Uterus (tissue), 4 donors: ENCODE measurements at regions of chr2 and their contacts with region 1.

Region 1: GRCh38 chr2:62831729-62832128 is 126.2 kb downstream of the EHBP1 start:
- DNase-seq: no peak
- H3K4me3 ChIP-seq: no peak overlapping the region
- H3K27ac ChIP-seq: no peak overlapping the region
- H3K4me1 ChIP-seq: no peaks in the 10 kb centered on the region
- H3K27me3 ChIP-seq: no peaks in the 10 kb centered on the region
- CTCF ChIP-seq: no peak
- POLR2A ChIP-seq: no peak

Region 2: DNA sequence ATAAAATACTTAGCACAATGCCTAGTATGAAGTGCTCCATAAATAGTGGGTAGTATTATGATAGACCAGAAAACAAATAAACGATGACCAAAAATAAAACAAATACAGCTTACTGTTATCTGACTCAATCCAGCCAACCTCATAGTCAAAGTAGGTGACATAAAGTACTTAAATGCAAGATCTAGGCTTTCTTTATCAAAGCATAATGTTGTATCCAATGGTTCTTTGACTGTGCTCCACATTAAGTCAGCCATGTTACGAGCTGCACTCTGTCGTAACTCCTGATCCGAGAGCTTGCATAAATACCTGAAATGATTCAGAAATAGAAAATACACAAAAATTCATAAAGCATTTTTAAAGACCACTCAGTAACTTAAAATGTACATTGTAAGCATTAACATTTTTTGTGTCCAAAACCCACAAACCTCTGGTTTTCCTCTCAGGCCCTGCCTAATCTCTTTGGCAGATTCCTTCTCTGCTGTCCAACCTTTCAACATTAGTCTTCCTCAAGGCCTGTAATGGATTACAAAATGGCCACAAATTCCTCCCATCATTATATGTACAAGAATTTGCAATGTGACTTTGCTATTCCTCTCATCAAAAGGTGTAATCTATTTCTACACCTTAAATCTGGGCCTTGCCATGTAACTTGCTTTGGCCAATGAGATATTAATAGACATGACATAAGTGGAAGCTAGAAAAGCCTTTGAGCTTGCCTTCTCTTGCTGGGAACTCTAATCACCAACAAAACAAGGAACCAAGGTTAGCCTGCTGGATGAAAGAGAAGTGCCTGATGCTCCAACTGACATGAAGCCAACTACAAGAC is 1451.5 kb before region 1 on chr2:
- intact Hi-C with region 1: loop called (anchors 10 kb)
- DNase-seq: no peak
- H3K4me3 ChIP-seq: no peak overlapping the region
- H3K27ac ChIP-seq: no peak overlapping the region
- H3K4me1 ChIP-seq: no peaks in the 10 kb centered on the region
- H3K27me3 ChIP-seq: no peaks in the 10 kb centered on the region
- CTCF ChIP-seq: no peak
- POLR2A ChIP-seq: no peak

Region 3: GRCh38 chr2:62596061-62596921 is 235.4 kb before region 1 on chr2:
- intact Hi-C with region 1: no loop called
- DNase-seq: no peak
- H3K4me3 ChIP-seq: no peak overlapping the region
- H3K27ac ChIP-seq: peak overlapping the region in 1 of 2 donors; percentile 26
- H3K4me1 ChIP-seq: no peaks in the 10 kb centered on the region
- H3K27me3 ChIP-seq: no peaks in the 10 kb centered on the region
- CTCF ChIP-seq: no peak
- POLR2A ChIP-seq: no peak